ENCODE measurements at regions of chr1 and their contacts with region 1.

Region 1: DNA sequence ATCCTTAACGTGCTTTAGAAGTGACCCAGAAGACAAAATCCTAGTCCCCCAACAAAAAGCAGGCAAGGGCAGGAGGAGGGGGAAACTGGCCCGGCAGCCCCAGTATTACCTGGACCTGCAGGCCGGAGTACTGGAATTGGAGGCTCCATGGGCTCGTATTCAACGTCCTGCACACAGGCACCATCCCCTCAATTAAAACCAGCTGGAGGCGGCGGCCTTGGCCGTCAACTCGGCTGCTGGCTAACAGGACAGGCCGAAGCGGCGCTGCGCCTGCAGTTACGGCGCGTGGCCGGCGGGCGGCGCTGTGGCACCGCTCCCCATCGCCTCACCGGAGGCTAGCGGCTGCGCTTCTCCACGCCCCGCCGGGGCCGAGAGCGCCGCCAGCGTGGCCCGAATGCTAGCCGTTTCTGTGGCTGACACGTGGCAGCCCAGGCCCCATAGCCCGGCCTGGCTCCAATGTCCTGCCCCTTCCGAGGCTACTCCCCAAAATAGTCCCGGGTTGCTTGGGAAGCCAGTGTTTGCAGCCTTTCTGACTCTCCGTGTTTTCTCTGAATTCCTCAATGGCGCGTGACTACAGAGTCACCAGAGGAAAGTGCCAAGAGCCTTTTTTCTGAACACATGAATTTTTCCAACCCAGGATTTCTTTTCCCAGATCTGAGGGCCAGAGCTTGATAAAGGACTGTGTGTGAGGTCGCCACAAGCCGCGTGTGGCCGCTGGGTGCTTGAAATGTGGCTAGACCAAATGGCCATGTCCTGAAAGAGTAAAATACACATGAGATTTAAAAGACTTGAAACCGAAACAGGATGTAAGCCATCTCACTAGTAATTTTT is 82.5 kb downstream of the HHIPL2 start:
- DNase-seq: peak; percentile 100
- ATAC-seq: peak; percentile 99
- H3K4me3 ChIP-seq: peak overlapping the region; percentile 70
- H3K27ac ChIP-seq: peak overlapping the region; percentile 83
- H3K4me1 ChIP-seq: peaks cover 7% of the 10 kb centered on the region; the same call in 1 of the 2 replicates
- H3K27me3 ChIP-seq: no peaks in the 10 kb centered on the region
- CTCF ChIP-seq: peak; percentile 100

Region 2: DNA sequence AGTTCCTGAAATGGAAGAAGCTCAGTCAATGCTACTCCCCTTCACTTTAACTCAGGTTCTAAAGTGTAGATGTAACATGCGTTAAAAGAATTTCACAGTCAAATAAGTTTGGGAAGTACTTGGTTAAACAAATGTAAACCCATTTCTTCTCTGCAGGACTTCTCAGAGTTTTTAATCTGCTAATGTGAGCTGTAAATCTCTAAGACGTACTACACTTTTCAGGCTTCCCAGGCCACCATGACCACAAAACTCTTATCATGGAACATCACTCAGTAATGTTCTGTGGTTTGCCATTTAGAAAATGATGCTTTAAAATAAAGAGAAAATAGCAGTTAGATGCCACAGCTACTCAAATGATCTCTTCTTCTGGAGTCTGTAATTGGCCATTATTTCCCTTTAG is 21.9 kb before region 1 on chr1:
- CTCF ChIA-PET with region 1: no interaction called
- POLR2A ChIA-PET with region 1: no interaction called
- intact Hi-C with region 1: no loop called
- DNase-seq: no peak
- ATAC-seq: no peak
- H3K4me3 ChIP-seq: no peak overlapping the region
- H3K27ac ChIP-seq: no peak overlapping the region
- H3K4me1 ChIP-seq: no peaks in the 10 kb centered on the region
- H3K27me3 ChIP-seq: peaks cover 38% of the 10 kb centered on the region
- CTCF ChIP-seq: no peak

Region 3: GRCh38 chr1:222546548-222547259 is 81.3 kb after region 1 on chr1:
- CTCF ChIA-PET with region 1: no interaction called
- POLR2A ChIA-PET with region 1: no interaction called
- intact Hi-C with region 1: loop called (anchors 2 kb)
- DNase-seq: peak; percentile 96
- ATAC-seq: peak; percentile 93
- H3K4me3 ChIP-seq: peak overlapping the region; percentile 16; the same call in 1 of the 2 replicates
- H3K27ac ChIP-seq: peak overlapping the region; percentile 41
- H3K4me1 ChIP-seq: peaks cover 25% of the 10 kb centered on the region
- H3K27me3 ChIP-seq: no peaks in the 10 kb centered on the region
- CTCF ChIP-seq: no peak

Region 4: GRCh38 chr1:222600281-222600680 is 134.9 kb after region 1 on chr1:
- CTCF ChIA-PET with region 1: no interaction called
- POLR2A ChIA-PET with region 1: no interaction called
- intact Hi-C with region 1: loop called (anchors 1 kb)
- DNase-seq: peak; percentile 92
- ATAC-seq: peak; percentile 87
- H3K4me3 ChIP-seq: peak overlapping the region; percentile 1; the same call in 1 of the 2 replicates
- H3K27ac ChIP-seq: peak overlapping the region; percentile 70
- H3K4me1 ChIP-seq: peaks cover 32% of the 10 kb centered on the region
- H3K27me3 ChIP-seq: no peaks in the 10 kb centered on the region
- CTCF ChIP-seq: no peak

Region 5: DNA sequence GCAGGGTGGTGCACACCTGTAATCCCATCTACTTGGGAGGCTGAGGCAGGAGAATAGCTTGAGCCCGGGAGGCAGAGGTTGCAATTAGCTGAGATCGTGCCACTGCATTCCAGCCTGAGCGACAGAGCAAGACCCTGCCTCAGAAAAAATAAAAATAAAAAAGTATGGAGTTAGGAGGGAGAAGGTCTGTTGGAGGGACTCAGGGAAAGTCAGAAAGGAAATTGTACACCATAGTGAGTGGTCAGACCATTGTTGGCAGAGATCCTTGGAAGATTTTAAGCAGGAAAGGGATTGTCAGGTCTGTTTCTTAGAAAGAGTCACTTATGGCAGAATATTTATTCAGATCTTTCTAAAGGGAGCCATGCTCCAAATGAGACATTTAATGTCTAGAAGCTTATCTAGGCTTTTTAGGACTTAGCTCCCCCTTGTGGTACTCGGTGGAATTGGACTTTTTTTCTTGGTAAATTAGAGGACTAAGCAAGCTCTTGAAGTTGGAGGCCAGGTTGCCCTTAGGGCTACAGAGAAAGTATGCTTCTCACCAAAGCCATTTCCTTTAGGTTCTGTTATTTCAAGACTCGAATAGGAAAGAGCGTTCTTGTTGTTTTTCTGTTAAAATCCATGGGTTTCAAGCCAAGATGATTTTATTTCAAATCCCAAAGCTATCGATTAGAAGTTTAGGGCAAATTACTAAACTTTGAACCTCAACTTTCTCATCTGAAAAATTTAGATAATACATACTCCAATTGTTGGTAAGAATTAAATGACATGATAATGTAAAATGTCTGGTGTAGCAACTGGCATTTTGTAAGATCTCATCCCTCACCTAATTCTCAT is 169.0 kb after region 1 on chr1:
- CTCF ChIA-PET with region 1: interaction called, 29 read pairs
- POLR2A ChIA-PET with region 1: interaction called, 5 read pairs
- intact Hi-C with region 1: loop called (anchors 1 kb)
- DNase-seq: peak; percentile 100
- ATAC-seq: peak; percentile 76
- H3K4me3 ChIP-seq: no peak overlapping the region
- H3K27ac ChIP-seq: no peak overlapping the region
- H3K4me1 ChIP-seq: no peaks in the 10 kb centered on the region
- H3K27me3 ChIP-seq: no peaks in the 10 kb centered on the region
- CTCF ChIP-seq: peak; percentile 99

Region 6: DNA sequence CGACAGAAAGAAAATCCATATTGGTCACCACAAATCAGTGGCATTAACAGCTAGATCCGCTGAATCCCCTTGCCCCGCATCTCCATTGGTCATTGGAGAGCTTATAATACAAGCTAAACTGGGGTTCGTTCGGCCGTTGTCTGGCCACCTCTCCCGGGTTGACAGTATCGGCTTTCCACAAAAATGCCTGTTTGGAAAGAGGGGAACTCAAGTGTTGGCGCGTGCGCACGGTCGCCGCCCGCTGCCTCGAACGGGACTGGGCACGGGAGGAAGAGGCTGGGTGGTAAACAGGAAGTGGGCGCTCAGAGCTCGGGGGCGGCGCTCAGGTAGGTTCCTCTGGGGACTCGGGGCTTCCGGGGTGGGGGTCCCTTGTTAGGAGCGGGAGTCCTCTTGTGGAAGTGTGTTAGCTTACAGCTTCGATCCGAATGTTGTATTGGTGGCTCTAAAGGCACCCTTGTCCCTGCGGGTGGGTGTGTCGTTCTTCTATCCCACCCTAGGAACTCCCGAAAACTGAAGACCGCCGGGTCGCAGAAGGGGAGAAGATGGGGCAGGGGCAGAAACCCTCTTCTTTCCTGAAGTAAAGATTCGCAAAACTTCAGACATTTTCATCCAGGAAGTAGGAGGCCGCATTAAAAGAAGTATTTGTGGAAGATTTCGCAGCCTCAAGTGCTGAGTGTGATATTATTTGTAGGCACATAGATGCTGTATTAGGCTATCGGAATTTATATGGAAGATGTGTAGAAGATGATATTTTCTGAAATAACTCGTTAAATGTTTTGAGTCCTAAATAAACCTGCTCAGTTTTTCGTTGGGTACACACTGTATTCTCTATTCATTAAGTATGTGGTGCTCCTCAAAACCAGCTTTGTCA is 247.9 kb after region 1 on chr1:
- CTCF ChIA-PET with region 1: no interaction called
- POLR2A ChIA-PET with region 1: interaction called, 5 read pairs
- intact Hi-C with region 1: loop called (anchors 1 kb)
- DNase-seq: peak; percentile 99
- ATAC-seq: peak; percentile 63
- H3K4me3 ChIP-seq: peak overlapping the region; percentile 79
- H3K27ac ChIP-seq: peak overlapping the region; percentile 78
- H3K4me1 ChIP-seq: peaks cover 19% of the 10 kb centered on the region
- H3K27me3 ChIP-seq: no peaks in the 10 kb centered on the region
- CTCF ChIP-seq: no peak

Region 7: DNA sequence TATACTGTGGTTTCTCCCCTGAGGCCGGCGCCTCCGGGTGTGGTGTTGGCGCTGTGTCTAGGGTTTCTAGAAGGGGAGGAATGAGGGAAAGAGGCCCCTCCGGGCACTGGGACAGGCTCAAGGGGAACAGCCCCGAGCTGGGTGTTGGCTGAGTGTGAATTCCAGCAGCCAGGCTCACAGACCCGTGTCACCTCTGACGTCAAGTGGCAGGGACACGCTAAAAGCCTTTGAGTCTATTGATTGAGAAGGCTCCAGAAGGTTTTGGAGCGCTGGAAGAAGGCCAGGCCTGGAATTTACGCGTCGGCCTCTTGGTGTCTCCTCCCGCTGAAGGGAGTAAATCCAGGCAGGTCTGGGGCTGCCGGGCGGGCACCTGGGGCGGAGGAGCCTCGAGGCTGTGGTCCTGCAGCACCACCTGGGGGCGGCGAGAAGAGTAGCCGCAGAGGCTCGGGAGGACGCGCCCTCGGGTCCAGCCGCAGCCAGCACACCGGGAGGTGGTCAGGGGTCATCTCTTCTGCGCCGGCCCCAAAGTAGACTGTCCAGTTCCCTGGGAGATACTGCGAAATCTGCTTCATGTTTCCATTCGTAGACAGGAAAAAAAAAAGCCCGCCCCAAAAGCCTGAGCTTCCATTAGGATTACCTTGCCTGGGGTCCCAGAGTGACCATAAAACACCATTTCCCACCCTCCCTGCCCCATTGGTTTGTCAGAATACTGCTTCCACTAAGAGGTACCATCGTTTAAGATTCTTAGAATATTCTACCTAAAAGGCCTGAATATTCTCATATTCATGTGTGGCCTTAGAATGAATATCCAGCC is 616.0 kb after region 1 on chr1:
- CTCF ChIA-PET with region 1: interaction called, 7 read pairs
- POLR2A ChIA-PET with region 1: no interaction called
- intact Hi-C with region 1: loop called (anchors 10 kb)
- DNase-seq: peak; percentile 99
- ATAC-seq: peak; percentile 96
- H3K4me3 ChIP-seq: peak overlapping the region; percentile 39; the same call in 1 of the 2 replicates
- H3K27ac ChIP-seq: peak overlapping the region; percentile 49
- H3K4me1 ChIP-seq: no peaks in the 10 kb centered on the region
- H3K27me3 ChIP-seq: no peaks in the 10 kb centered on the region
- CTCF ChIP-seq: peak; percentile 97